OCI-LY7 (cell line): ENCODE measurements at regions of chr22 and their contacts with region 1.

Region 1: GRCh38 chr22:17501679-17502285 is 61.5 kb upstream of the SLC25A18 start:
- DNase-seq: peak; percentile 85
- H3K4me3 ChIP-seq: peak overlapping the region; percentile 27
- H3K27ac ChIP-seq: no peak overlapping the region
- H3K4me1 ChIP-seq: peaks cover 10% of the 10 kb centered on the region
- CTCF ChIP-seq: peak; percentile 99

Region 2: GRCh38 chr22:17077255-17077654 is 424.5 kb before region 1 on chr22:
- CTCF ChIA-PET with region 1: no interaction called
- POLR2A ChIA-PET with region 1: interaction called, 3 read pairs
- intact Hi-C with region 1: loop called (anchors 1 kb)
- DNase-seq: no peak
- H3K4me3 ChIP-seq: no peak overlapping the region
- H3K27ac ChIP-seq: no peak overlapping the region
- H3K4me1 ChIP-seq: no peaks in the 10 kb centered on the region
- CTCF ChIP-seq: no peak

Region 3: DNA sequence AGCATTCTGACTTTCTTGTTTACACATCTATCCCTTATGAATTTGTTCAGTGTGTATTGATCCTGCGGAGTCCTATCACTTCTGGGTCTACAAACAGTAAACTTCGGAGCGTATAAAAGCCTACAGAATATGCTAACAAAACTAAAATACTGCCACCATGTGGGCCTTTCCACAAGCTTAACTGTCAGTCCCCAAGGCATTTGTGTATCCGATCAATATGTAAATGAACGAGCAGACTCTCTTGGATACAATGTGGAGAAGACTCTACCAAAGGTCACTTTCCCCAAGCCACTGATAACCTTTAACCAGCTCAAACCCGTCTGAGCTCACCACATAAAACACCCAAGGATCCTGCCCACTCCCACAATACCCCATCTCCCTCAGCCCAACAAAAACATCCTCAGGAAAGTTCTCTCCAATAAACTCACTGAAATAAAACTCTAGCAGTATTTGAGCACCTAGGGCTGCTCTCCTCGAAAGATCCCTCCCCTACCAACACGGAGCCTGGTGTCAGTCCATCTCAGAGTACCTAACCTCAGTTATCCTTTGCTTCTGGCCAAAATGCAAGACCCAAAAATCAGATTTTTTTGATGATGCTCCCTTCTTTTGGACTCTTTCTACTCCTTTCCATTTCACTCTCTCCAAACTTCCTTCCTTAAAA is 300.4 kb before region 1 on chr22:
- CTCF ChIA-PET with region 1: interaction called, 9 read pairs
- POLR2A ChIA-PET with region 1: no interaction called
- intact Hi-C with region 1: loop called (anchors 1 kb)
- DNase-seq: no peak
- H3K4me3 ChIP-seq: no peak overlapping the region
- H3K27ac ChIP-seq: no peak overlapping the region
- H3K4me1 ChIP-seq: no peaks in the 10 kb centered on the region
- CTCF ChIP-seq: peak; percentile 30; the same call in 1 of the 2 replicates

Region 4: GRCh38 chr22:17368554-17369438 is 133.0 kb before region 1 on chr22:
- CTCF ChIA-PET with region 1: no interaction called
- POLR2A ChIA-PET with region 1: interaction called, 6 read pairs
- intact Hi-C with region 1: loop called (anchors 5 kb)
- DNase-seq: peak; percentile 71
- H3K4me3 ChIP-seq: peak overlapping the region; percentile 66
- H3K27ac ChIP-seq: no peak overlapping the region
- H3K4me1 ChIP-seq: peaks cover 14% of the 10 kb centered on the region
- CTCF ChIP-seq: no peak

Region 5: DNA sequence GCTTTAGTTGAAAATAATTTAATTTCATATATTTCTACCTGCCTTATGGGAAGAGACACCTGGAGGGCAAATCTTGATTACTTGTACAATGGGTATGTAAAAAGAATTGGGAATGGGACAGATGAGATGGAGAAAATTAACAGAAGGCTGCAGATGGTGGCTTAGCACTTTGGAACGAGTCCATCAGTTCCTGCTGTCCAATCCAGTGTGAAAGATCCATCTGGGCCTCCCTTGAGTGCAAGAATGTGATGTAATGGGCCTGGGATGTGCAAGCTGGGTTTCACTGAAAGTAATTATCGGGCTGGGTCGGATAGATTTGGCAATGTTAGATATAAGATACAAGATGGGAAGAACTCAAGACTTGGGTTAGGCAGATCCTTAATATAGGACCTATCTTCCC is 90.6 kb before region 1 on chr22:
- CTCF ChIA-PET with region 1: no interaction called
- POLR2A ChIA-PET with region 1: no interaction called
- intact Hi-C with region 1: no loop called
- DNase-seq: no peak
- H3K4me3 ChIP-seq: no peak overlapping the region
- H3K27ac ChIP-seq: no peak overlapping the region
- H3K4me1 ChIP-seq: no peaks in the 10 kb centered on the region
- CTCF ChIP-seq: no peak

Region 6: GRCh38 chr22:17518406-17518805 is 16.6 kb after region 1 on chr22:
- CTCF ChIA-PET with region 1: no interaction called
- POLR2A ChIA-PET with region 1: interaction called, 10 read pairs
- intact Hi-C with region 1: no loop called
- DNase-seq: no peak
- H3K4me3 ChIP-seq: no peak overlapping the region
- H3K27ac ChIP-seq: no peak overlapping the region
- H3K4me1 ChIP-seq: no peaks in the 10 kb centered on the region
- CTCF ChIP-seq: no peak